K562 (cell line): ENCODE measurements at regions of chr12 and their contacts with region 1.

Region 1: DNA sequence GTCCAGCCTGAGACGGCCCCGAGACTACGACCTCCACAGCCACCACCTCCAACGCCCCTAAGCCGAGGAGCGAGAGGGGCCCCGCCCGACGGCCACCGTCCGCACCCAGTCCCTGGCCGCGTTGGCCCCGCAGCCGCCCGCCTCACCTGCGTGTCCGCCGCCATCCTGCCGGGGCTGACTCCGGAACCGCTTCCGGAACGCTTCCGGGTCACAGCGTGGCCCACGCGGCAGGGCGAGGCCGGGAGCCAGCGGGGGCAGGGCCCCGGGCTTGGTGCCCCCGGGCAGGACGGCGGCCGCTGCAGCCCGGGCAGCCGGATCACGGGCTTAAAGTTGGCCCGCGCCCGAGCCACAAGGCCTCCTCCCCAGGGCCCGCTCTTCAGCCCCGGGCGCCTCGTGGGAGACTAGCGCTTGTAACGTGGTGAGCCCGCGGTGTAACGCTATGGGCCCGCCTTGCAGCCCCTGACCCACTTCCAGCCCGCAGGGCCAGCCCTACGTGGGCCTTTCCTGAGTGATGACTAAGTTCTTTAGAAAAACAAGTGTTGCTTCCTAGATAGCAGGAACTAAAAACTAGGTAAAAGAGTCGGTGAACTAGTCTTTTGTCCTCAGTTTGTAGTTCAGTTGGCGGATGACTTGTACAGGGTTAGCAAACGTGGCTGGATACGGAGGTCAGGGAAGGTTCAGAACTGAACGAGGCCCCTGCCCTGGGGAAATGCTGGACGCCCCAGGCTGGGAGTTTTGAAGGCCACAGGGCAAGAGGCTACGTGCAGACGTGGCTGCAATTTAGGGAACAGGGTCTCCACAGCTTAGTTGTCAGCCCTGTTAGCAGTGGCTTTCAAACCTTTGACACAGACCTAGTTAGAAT is at the start of gene GCN1:
- DNase-seq: peak; percentile 85 to 88 (median 86)
- ATAC-seq: peak; percentile 79
- H3K4me3 ChIP-seq: peak within 1 kb of the TSS; percentile 98
- H3K27ac ChIP-seq: peak within 1 kb of the TSS; percentile 96
- H3K4me1 ChIP-seq: peaks cover 12 to 38% of the 10 kb centered on the region in 2 experiments; a peak in 4 of 5 replicates
- H3K27me3 ChIP-seq: no peaks in the 10 kb centered on the region
- CTCF ChIP-seq: no peak
- EP300 ChIP-seq: no peak
- POLR2A ChIP-seq: peak; percentile 77
- RAD21 ChIP-seq: no peak
- polyA plus RNA-seq, gene GCN1: 11.9 to 18.2 TPM

Region 2: GRCh38 chr12:120132863-120133385 is 61.8 kb before region 1 on chr12:
- CTCF ChIA-PET with region 1: no interaction called
- POLR2A ChIA-PET with region 1: no interaction called
- in situ Hi-C with region 1: no loop called
- intact Hi-C with region 1: no loop called
- DNase-seq: no peak
- ATAC-seq: no peak
- H3K4me3 ChIP-seq: no peak overlapping the region
- H3K27ac ChIP-seq: no peak overlapping the region
- H3K4me1 ChIP-seq: no peaks in the 10 kb centered on the region
- H3K27me3 ChIP-seq: no peaks in the 10 kb centered on the region
- CTCF ChIP-seq: no peak
- EP300 ChIP-seq: no peak
- POLR2A ChIP-seq: no peak
- RAD21 ChIP-seq: no peak

Region 3: GRCh38 chr12:120175062-120175461 is 19.7 kb before region 1 on chr12:
- CTCF ChIA-PET with region 1: no interaction called
- POLR2A ChIA-PET with region 1: interaction called, 13 read pairs
- in situ Hi-C with region 1: no loop called
- intact Hi-C with region 1: no loop called
- DNase-seq: no peak
- ATAC-seq: no peak
- H3K4me3 ChIP-seq: no peak overlapping the region
- H3K27ac ChIP-seq: no peak overlapping the region
- H3K4me1 ChIP-seq: no peaks in the 10 kb centered on the region
- H3K27me3 ChIP-seq: no peaks in the 10 kb centered on the region
- CTCF ChIP-seq: no peak
- EP300 ChIP-seq: no peak
- POLR2A ChIP-seq: no peak
- RAD21 ChIP-seq: no peak

Region 4: DNA sequence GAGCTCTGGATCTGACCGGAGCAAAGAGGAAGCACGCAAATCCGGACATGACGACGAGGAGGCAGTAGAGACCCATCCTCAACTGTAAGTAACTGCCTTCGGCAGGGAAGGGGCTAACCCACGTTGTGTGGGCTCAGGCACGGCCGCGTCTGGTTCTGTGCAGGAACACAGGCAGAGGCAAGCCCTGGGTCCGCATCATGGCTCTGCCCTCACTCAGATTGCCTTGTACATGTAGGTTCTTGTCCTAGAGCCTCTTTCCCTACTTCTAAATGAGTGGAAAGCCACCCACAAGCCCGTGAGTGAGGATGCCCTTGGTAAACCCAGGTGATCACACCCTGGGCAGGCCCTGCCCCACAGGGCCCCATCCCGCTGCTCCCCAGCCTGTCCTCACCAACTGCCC is 15.1 kb after region 1 on chr12:
- CTCF ChIA-PET with region 1: no interaction called
- POLR2A ChIA-PET with region 1: interaction called, 70 read pairs
- in situ Hi-C with region 1: no loop called
- intact Hi-C with region 1: no loop called
- DNase-seq: no peak
- ATAC-seq: no peak
- H3K4me3 ChIP-seq: no peak overlapping the region
- H3K27ac ChIP-seq: no peak overlapping the region
- H3K4me1 ChIP-seq: peaks cover under 1 to 14% of the 10 kb centered on the region in 2 experiments; a peak in 3 of 5 replicates
- H3K27me3 ChIP-seq: no peaks in the 10 kb centered on the region
- CTCF ChIP-seq: no peak
- EP300 ChIP-seq: no peak
- POLR2A ChIP-seq: no peak
- RAD21 ChIP-seq: no peak

Region 5: GRCh38 chr12:120234643-120235368 is 40.0 kb after region 1 on chr12:
- CTCF ChIA-PET with region 1: no interaction called
- POLR2A ChIA-PET with region 1: interaction called, 331 read pairs
- in situ Hi-C with region 1: no loop called
- intact Hi-C with region 1: no loop called
- DNase-seq: peak; percentile 72 to 88 (median 76)
- ATAC-seq: peak; percentile 61
- H3K4me3 ChIP-seq: no peak overlapping the region
- H3K27ac ChIP-seq: peak overlapping the region; percentile 51; the same call in 2 of the 3 replicates
- H3K4me1 ChIP-seq: peaks cover 63 to 72% of the 10 kb centered on the region in 2 experiments
- H3K27me3 ChIP-seq: no peaks in the 10 kb centered on the region
- CTCF ChIP-seq: peak; percentile 28 to 51 (median 49); a peak in 4 of 6 replicates
- EP300 ChIP-seq: peak; percentile 50; the same call in 1 of the 2 replicates
- POLR2A ChIP-seq: no peak
- RAD21 ChIP-seq: peak in 1 of 2 experiments; percentile 61; a peak in 3 of 4 replicates

Region 6: DNA sequence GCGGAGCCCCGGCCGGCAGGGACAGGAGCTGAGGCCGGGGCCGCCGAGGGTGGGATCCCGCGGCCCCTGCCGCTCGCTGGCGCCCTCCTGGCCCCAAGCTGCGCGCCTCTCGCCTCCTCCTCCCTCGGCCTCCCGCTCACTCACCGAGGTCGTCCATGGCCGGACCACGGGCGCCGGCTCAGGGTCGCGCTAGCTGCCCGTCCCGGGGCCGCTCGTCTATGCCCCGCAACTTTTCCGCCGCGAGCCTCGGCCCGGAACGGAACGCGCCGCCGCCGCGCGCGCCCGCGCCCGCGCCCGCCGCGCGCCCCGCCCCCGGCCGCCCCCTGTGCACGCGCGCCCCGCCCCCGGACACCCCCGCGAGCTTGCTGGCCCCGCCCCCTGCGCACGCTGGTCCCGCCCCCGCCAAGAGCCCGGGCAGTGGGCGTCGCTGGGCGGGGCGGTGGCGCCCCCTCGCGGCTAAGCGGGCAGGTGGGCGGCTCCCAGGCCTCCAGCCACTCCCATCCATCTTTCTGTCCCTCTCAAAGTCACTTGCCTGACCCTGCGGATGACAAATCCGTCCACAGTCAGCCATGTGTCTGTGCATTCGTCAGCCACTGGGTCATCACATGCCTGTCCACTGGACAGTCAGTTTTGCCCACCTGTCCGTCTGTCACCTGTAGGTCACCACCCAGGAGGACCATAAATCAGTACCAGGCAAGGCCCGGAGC is 70.9 kb after region 1 on chr12 and contains the start of gene PXN:
- CTCF ChIA-PET with region 1: no interaction called
- POLR2A ChIA-PET with region 1: interaction called, 110 read pairs
- in situ Hi-C with region 1: no loop called
- intact Hi-C with region 1: no loop called
- DNase-seq: peak; percentile 88 to 99 (median 98)
- ATAC-seq: peak; percentile 95
- H3K4me3 ChIP-seq: peak within 1 kb of the TSS; percentile 70
- H3K27ac ChIP-seq: peak within 1 kb of the TSS; percentile 76
- H3K4me1 ChIP-seq: peaks cover 37% of the 10 kb centered on the region in 2 experiments; a peak in 4 of 5 replicates
- H3K27me3 ChIP-seq: no peaks in the 10 kb centered on the region
- CTCF ChIP-seq: peak; percentile 68 to 92 (median 86)
- EP300 ChIP-seq: no peak
- POLR2A ChIP-seq: peak; percentile 60
- RAD21 ChIP-seq: peak; percentile 91 to 94
- polyA plus RNA-seq, gene PXN: 4.0 to 4.8 TPM

Region 7: GRCh38 chr12:120402217-120402616 is 207.5 kb after region 1 on chr12:
- CTCF ChIA-PET with region 1: no interaction called
- POLR2A ChIA-PET with region 1: no interaction called
- in situ Hi-C with region 1: no loop called
- intact Hi-C with region 1: no loop called
- DNase-seq: no peak
- ATAC-seq: peak; percentile 76
- H3K4me3 ChIP-seq: no peak overlapping the region
- H3K27ac ChIP-seq: no peak overlapping the region
- H3K4me1 ChIP-seq: peaks cover 0 to 7% of the 10 kb centered on the region in 2 experiments; a peak in 2 of 5 replicates
- H3K27me3 ChIP-seq: peaks cover 3 to 15% of the 10 kb centered on the region in 2 experiments; a peak in 3 of 5 replicates
- CTCF ChIP-seq: no peak
- EP300 ChIP-seq: no peak
- POLR2A ChIP-seq: no peak
- RAD21 ChIP-seq: no peak